ENCODE measurements at regions of chr12 and their contacts with region 1.

Region 1: DNA sequence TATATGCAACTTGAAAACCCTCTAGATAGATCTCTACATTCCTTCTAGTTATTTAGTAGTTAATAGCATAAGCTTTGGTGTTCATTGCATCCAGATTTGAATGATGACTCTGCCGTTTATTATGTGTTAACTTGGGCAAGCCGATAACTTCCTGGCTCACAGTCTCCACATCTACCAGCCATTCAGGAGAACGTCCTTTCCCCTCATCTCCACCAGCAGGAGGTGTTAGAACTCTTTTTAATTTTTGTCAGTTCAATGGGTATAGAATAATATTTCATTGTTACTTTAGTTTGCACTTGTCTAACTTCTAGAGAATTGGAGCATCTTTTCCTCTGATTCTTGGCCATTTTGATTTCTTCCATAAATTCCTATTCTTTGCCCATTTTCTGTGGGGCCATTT is 30.0 kb upstream of the WSCD2 start:
- DNase-seq: no peak
- ATAC-seq: peak; percentile 50; the same call in 2 of the 3 replicates
- H3K4me3 ChIP-seq: no peak overlapping the region
- H3K27ac ChIP-seq: no peak overlapping the region
- H3K4me1 ChIP-seq: no peaks in the 10 kb centered on the region; the same call in 1 of the 2 replicates
- H3K27me3 ChIP-seq: no peaks in the 10 kb centered on the region
- CTCF ChIP-seq: peak; percentile 32 to 37 (median 35); a peak in 4 of 6 replicates
- EP300 ChIP-seq: no peak
- POLR2A ChIP-seq: no peak
- RAD21 ChIP-seq: peak; percentile 59

Region 2: GRCh38 chr12:108043750-108044533 is 55.1 kb before region 1 on chr12:
- CTCF ChIA-PET with region 1: no interaction called
- POLR2A ChIA-PET with region 1: no interaction called
- RAD21 ChIA-PET with region 1: no interaction called
- SMC1A ChIA-PET with region 1: no interaction called
- in situ Hi-C with region 1: no loop called
- intact Hi-C with region 1: no loop called
- DNase-seq: no peak
- ATAC-seq: no peak
- H3K4me3 ChIP-seq: no peak overlapping the region
- H3K27ac ChIP-seq: no peak overlapping the region
- H3K4me1 ChIP-seq: peaks cover 4% of the 10 kb centered on the region; the same call in 1 of the 2 replicates
- H3K27me3 ChIP-seq: no peaks in the 10 kb centered on the region; a peak in 1 of 4 replicates
- CTCF ChIP-seq: no peak
- EP300 ChIP-seq: no peak
- POLR2A ChIP-seq: no peak
- RAD21 ChIP-seq: no peak

Region 3: GRCh38 chr12:108129017-108129812 is 30.1 kb after region 1 on chr12 and contains the start of gene WSCD2:
- CTCF ChIA-PET with region 1: no interaction called
- POLR2A ChIA-PET with region 1: no interaction called
- RAD21 ChIA-PET with region 1: no interaction called
- SMC1A ChIA-PET with region 1: no interaction called
- in situ Hi-C with region 1: no loop called
- intact Hi-C with region 1: no loop called
- DNase-seq: no peak
- ATAC-seq: peak; percentile 69
- H3K4me3 ChIP-seq: no peak within 1 kb of the TSS
- H3K27ac ChIP-seq: no peak within 1 kb of the TSS
- H3K4me1 ChIP-seq: no peaks in the 10 kb centered on the region
- H3K27me3 ChIP-seq: peaks cover 4 to 8% of the 10 kb centered on the region in 2 experiments
- CTCF ChIP-seq: no peak
- EP300 ChIP-seq: no peak
- POLR2A ChIP-seq: no peak
- RAD21 ChIP-seq: no peak
- polyA plus RNA-seq, gene WSCD2: not detected

Region 4: DNA sequence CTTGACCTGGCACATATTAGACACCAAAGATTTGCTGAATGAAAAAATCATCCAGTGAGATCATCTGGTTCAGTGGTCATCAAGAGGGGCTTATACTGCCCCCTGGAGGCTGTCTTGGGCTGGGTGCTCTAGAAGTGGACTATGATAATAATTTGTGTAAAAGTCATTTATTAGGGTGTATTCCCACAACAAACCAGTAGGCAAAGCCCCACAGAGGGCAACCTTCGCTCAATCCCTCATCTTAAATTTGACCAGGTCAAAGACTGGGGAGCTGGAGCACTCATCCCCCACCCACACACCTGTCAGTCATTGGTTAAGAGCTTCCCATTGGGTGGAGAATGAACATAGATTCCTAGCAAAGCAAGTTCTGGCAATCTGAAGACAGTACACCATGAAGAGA is 396.0 kb after region 1 on chr12:
- CTCF ChIA-PET with region 1: interaction called, 3 read pairs
- POLR2A ChIA-PET with region 1: no interaction called
- RAD21 ChIA-PET with region 1: no interaction called
- SMC1A ChIA-PET with region 1: no interaction called
- in situ Hi-C with region 1: no loop called
- intact Hi-C with region 1: loop called (anchors 5 kb)
- DNase-seq: no peak
- ATAC-seq: peak; percentile 88
- H3K4me3 ChIP-seq: no peak overlapping the region
- H3K27ac ChIP-seq: no peak overlapping the region
- H3K4me1 ChIP-seq: no peaks in the 10 kb centered on the region; the same call in 1 of the 2 replicates
- H3K27me3 ChIP-seq: no peaks in the 10 kb centered on the region
- CTCF ChIP-seq: peak; percentile 42 to 67 (median 57)
- EP300 ChIP-seq: no peak
- POLR2A ChIP-seq: no peak
- RAD21 ChIP-seq: peak; percentile 68